Activated naive CD4-positive, alpha-beta T cell treated with anti-CD3 and anti-CD28 coated beads for 36 hours (primary cell): ENCODE measurements at regions of chr1 and their contacts with region 1.

Region 1: GRCh38 chr1:9181176-9181906 is 52.4 kb upstream of the GPR157 start:
- DNase-seq: peak; percentile 81
- H3K4me3 Mint-ChIP-seq: peak overlapping the region; percentile 80
- H3K27ac Mint-ChIP-seq: peak overlapping the region; percentile 64
- H3K4me1 Mint-ChIP-seq: peaks cover 6% of the 10 kb centered on the region
- H3K27me3 Mint-ChIP-seq: peaks cover 25% of the 10 kb centered on the region

Region 2: DNA sequence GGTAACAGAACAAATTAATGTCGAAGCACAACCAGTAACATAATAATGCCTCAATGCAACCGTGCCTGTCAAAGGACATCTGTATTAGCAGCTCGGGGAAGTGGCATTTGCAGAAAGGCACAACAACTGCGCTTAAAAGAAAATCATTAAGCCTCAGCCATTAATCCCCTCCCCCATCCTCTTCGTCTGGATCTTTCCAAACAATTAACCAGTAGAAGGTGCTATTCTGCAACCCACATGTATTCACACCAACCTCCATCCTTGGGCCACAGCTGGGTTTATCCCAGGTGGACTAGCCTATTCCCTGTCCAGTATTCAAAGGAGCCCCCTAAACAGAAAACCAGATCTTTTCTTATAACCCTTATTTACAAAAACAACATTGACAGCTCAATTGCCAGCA is 366.5 kb before region 1 on chr1:
- CTCF ChIA-PET with region 1: no interaction called
- intact Hi-C with region 1: no loop called
- DNase-seq: no peak
- H3K4me3 Mint-ChIP-seq: peak overlapping the region; percentile 8
- H3K27ac Mint-ChIP-seq: no peak overlapping the region
- H3K4me1 Mint-ChIP-seq: peaks cover 50% of the 10 kb centered on the region
- H3K27me3 Mint-ChIP-seq: no peaks in the 10 kb centered on the region

Region 3: GRCh38 chr1:9128520-9129265 is 52.6 kb before region 1 on chr1 and contains the start of gene GPR157:
- CTCF ChIA-PET with region 1: no interaction called
- intact Hi-C with region 1: loop called (anchors 5 kb)
- DNase-seq: peak; percentile 84
- H3K4me3 Mint-ChIP-seq: peak within 1 kb of the TSS; percentile 91
- H3K27ac Mint-ChIP-seq: no peak within 1 kb of the TSS
- H3K4me1 Mint-ChIP-seq: peaks cover 34% of the 10 kb centered on the region
- H3K27me3 Mint-ChIP-seq: no peaks in the 10 kb centered on the region
- total RNA-seq, gene GPR157: 0.94 to 2.3 TPM

Region 4: GRCh38 chr1:9234223-9235095 is 53.1 kb after region 1 on chr1 and contains the start of gene H6PD:
- CTCF ChIA-PET with region 1: no interaction called
- intact Hi-C with region 1: loop called (anchors 5 kb)
- DNase-seq: peak; percentile 67
- H3K4me3 Mint-ChIP-seq: peak within 1 kb of the TSS; percentile 85
- H3K27ac Mint-ChIP-seq: peak within 1 kb of the TSS; percentile 79
- H3K4me1 Mint-ChIP-seq: peaks cover 34% of the 10 kb centered on the region
- H3K27me3 Mint-ChIP-seq: no peaks in the 10 kb centered on the region
- total RNA-seq, gene H6PD: 7.8 to 8.3 TPM